PC-9 (cell line): ENCODE measurements at regions of chr2 and their contacts with region 1.

Region 1: DNA sequence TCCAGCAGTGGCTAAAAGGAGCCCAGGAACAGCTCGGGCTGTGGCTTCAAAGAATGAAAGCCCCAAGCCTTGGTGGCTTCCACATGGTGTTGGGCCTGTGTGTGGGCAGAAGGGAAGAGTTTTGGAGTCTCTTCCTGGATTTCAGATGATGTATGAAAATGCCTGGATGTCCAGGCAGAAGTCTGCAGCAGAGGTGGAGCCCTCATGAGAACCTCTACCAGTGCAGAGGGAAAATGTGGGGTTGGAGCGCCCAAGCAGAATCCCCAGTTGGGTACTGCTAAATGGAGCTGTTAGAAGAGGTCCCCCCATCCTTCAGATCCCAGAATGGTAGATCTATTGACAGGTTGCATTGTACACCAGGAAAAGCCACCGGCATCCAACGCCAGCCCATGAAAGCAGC is 412.1 kb downstream of the TDRD15 start:
- DNase-seq: no peak
- H3K4me3 ChIP-seq: no peak overlapping the region
- H3K27ac ChIP-seq: no peak overlapping the region
- H3K4me1 ChIP-seq: no peaks in the 10 kb centered on the region
- H3K27me3 ChIP-seq: no peaks in the 10 kb centered on the region
- CTCF ChIP-seq: no peak

Region 2: GRCh38 chr2:21552981-21553380 is 17.2 kb after region 1 on chr2:
- CTCF ChIA-PET with region 1: no interaction called
- POLR2A ChIA-PET with region 1: no interaction called
- intact Hi-C with region 1: no loop called
- DNase-seq: no peak
- H3K4me3 ChIP-seq: no peak overlapping the region
- H3K27ac ChIP-seq: no peak overlapping the region
- H3K4me1 ChIP-seq: no peaks in the 10 kb centered on the region
- H3K27me3 ChIP-seq: peaks cover 24% of the 10 kb centered on the region
- CTCF ChIP-seq: no peak

Region 3: DNA sequence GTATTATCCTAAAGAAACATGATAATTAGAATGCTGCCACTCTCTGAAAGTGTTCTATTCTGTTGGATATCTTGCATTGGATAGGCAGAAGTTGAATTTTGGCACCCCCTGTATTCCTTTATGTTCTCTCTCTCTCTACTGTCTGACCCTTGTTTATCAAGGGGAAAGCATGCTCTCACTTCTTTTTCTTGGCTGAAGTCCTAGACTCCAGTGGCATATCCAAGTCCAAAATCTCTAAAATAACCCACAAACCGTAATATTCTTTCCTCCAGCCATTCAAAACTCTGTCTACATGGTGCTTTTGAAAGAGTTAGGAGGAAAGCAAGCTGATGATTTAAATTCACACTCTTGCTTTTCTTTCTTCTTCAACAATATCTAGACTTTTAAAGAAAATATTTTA is 257.6 kb after region 1 on chr2:
- CTCF ChIA-PET with region 1: no interaction called
- POLR2A ChIA-PET with region 1: interaction called, 12 read pairs
- intact Hi-C with region 1: no loop called
- DNase-seq: no peak
- H3K4me3 ChIP-seq: no peak overlapping the region
- H3K27ac ChIP-seq: no peak overlapping the region
- H3K4me1 ChIP-seq: no peaks in the 10 kb centered on the region
- H3K27me3 ChIP-seq: no peaks in the 10 kb centered on the region
- CTCF ChIP-seq: no peak